Adrenal gland (tissue), 19 donors: ENCODE measurements at regions of chr14 and their contacts with region 1.

Region 1: GRCh38 chr14:50773632-50774541 is 57.1 kb downstream of the NIN start:
- DNase-seq: peak; percentile 22 to 71 (median 41)
- H3K4me3 ChIP-seq: no peak overlapping the region
- H3K27ac ChIP-seq: no peak overlapping the region
- H3K4me1 ChIP-seq: peaks cover 0 to under 1% of the 10 kb centered on the region in 2 donors
- H3K27me3 ChIP-seq: no peaks in the 10 kb centered on the region
- CTCF ChIP-seq: peak; percentile 47 to 74 (median 64)
- POLR2A ChIP-seq: no peak

Region 2: GRCh38 chr14:50545619-50546018 is 228.3 kb before region 1 on chr14:
- intact Hi-C with region 1: loop called in 1 of 2 experiments (anchors 5 kb)
- DNase-seq: no peak
- H3K4me3 ChIP-seq: no peak overlapping the region
- H3K27ac ChIP-seq: no peak overlapping the region
- H3K4me1 ChIP-seq: no peaks in the 10 kb centered on the region
- H3K27me3 ChIP-seq: no peaks in the 10 kb centered on the region
- CTCF ChIP-seq: no peak
- POLR2A ChIP-seq: no peak

Region 3: DNA sequence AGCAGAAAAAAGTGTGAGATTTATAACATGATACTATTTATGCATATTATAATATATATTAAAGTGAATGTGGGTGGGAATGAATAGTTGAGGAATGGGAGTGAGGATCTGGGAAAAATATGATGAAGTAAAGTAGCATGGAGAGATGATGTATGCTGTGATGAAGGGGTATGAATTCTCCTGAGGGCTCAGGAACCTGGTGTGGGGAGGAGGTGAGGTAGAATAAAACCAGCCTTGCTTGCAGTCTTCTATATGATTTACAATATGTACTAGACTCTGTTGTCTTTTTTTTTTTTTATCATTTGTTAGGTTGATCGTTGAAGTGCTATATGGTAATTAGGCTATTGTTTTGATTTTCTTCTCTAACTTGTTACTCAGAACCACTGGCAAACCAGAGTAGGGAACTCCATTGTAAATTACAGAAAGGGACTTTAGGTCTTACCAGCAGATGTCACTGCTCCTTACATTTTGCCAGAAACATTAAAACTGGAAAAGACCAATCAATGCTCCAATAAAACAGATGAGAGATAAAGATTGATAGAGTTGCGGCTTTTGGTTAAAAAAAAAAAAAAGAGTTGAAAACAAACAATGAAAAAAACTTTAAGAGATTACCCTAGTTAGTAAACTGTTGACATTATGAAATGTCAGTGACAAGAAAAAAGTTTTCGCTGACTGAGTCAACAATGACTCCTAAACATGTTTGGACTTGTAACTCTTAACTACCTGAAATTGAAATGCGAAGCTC is 174.0 kb before region 1 on chr14:
- intact Hi-C with region 1: loop called (anchors 5 to 10 kb)
- DNase-seq: no peak
- H3K4me3 ChIP-seq: no peak overlapping the region
- H3K27ac ChIP-seq: no peak overlapping the region
- H3K4me1 ChIP-seq: no peaks in the 10 kb centered on the region
- H3K27me3 ChIP-seq: no peaks in the 10 kb centered on the region
- CTCF ChIP-seq: peak; percentile 20 to 67 (median 58)
- POLR2A ChIP-seq: no peak

Region 4: GRCh38 chr14:50619556-50620141 is 154.2 kb before region 1 on chr14:
- intact Hi-C with region 1: loop called in 1 of 2 experiments (anchors 5 kb)
- DNase-seq: no peak
- H3K4me3 ChIP-seq: no peak overlapping the region
- H3K27ac ChIP-seq: no peak overlapping the region
- H3K4me1 ChIP-seq: no peaks in the 10 kb centered on the region
- H3K27me3 ChIP-seq: no peaks in the 10 kb centered on the region
- CTCF ChIP-seq: peak; percentile 49 to 77 (median 68)
- POLR2A ChIP-seq: no peak

Region 5: DNA sequence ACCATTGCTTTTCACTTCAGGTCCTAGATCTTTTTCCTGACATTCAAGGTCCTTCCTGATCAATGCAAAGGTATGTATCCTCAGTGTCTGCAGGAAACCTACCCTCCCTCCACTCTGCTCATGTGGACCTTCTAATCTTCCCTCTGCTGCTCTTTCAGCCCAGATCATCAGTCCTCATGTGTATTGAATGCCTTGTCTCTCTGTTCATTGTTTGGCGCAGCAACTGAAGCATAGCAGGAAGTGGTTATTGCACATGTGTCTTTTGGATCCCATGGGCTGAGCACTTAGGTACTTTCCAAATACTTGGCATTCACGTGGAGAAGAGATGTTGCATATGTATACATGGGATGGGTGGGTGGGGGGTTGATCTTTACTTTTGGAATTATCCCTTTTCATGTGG is 61.4 kb after region 1 on chr14:
- intact Hi-C with region 1: no loop called
- DNase-seq: no peak
- H3K4me3 ChIP-seq: no peak overlapping the region
- H3K27ac ChIP-seq: no peak overlapping the region
- H3K4me1 ChIP-seq: peaks cover 0 to 9% of the 10 kb centered on the region in 2 donors
- H3K27me3 ChIP-seq: no peaks in the 10 kb centered on the region
- CTCF ChIP-seq: no peak
- POLR2A ChIP-seq: no peak

Region 6: DNA sequence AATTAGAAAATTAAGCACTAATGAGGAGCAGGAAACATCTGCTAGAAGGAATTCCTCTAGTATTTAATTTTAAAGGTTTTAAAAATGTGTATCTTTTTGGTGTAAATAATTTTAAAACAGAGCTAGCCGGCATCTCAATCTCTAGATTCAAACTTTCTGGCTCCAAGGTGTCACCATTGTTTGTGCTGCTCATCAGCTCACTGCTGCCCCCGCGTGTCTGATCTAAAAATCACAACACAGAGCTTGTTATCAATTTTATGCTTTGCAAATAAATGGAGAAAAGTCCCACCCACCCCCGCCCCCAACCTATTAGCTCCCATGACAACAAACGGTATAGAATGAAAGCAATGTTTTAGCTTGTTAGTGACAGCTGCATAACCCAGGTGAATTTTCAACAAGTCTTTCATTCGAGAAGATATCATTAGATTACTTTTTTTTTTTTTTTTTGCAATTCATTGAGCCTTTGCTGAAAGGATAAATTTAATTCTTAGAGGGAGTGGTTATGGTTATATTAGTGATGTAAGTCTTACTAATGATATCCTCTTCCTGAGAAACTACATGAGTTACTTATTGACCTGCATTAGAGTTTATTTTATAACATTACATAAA is 86.7 kb after region 1 on chr14:
- intact Hi-C with region 1: loop called in 1 of 2 experiments (anchors 5 kb)
- DNase-seq: peak; percentile 74 to 95 (median 84)
- H3K4me3 ChIP-seq: peak overlapping the region in 3 of 4 donors; percentile 51 to 68 (median 66)
- H3K27ac ChIP-seq: peak overlapping the region in 3 of 5 donors; percentile 53 to 73 (median 67)
- H3K4me1 ChIP-seq: peaks cover 0 to 6% of the 10 kb centered on the region in 2 donors
- H3K27me3 ChIP-seq: no peaks in the 10 kb centered on the region
- CTCF ChIP-seq: peak; percentile 49 to 83 (median 62)
- POLR2A ChIP-seq: no peak